PC-3 (cell line): ENCODE measurements at regions of chr13 and their contacts with region 1.

Region 1: GRCh38 chr13:101098873-101099272 is 317.4 kb downstream of the NALCN start:
- DNase-seq: no peak
- ATAC-seq: no peak
- H3K4me3 ChIP-seq: no peak overlapping the region
- H3K27ac ChIP-seq: no peak overlapping the region
- H3K4me1 ChIP-seq: no peaks in the 10 kb centered on the region
- H3K27me3 ChIP-seq: no peaks in the 10 kb centered on the region
- CTCF ChIP-seq: no peak

Region 2: GRCh38 chr13:100646030-100646673 is 452.7 kb before region 1 on chr13:
- CTCF ChIA-PET with region 1: no interaction called
- POLR2A ChIA-PET with region 1: no interaction called
- intact Hi-C with region 1: loop called (anchors 5 kb)
- DNase-seq: peak; percentile 48
- ATAC-seq: peak; percentile 64
- H3K4me3 ChIP-seq: no peak overlapping the region
- H3K27ac ChIP-seq: no peak overlapping the region
- H3K4me1 ChIP-seq: no peaks in the 10 kb centered on the region
- H3K27me3 ChIP-seq: no peaks in the 10 kb centered on the region
- CTCF ChIP-seq: peak; percentile 66

Region 3: DNA sequence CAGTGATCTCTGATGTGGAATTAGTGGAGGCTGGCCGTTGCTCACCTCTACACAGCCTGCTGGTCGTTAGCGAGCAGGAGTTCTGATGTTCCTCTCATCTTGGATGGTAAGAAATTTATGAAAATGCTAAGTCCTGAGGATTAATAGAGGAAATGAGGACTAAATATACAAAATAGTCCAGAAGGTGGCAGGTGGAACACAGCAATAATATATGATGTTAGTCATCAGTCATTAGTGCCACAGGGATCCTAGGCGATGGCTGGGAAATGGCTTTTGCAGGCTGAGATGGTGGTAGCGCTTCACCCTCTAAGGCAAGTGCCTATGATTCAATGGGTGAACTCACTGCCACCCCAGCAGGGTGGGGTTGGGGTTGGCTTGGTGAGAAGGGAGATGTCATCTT is 85.6 kb before region 1 on chr13:
- CTCF ChIA-PET with region 1: no interaction called
- POLR2A ChIA-PET with region 1: no interaction called
- intact Hi-C with region 1: loop called (anchors 1 kb)
- DNase-seq: peak; percentile 30
- ATAC-seq: peak; percentile 55
- H3K4me3 ChIP-seq: no peak overlapping the region
- H3K27ac ChIP-seq: no peak overlapping the region
- H3K4me1 ChIP-seq: peaks cover 1% of the 10 kb centered on the region; the same call in 1 of the 2 replicates
- H3K27me3 ChIP-seq: no peaks in the 10 kb centered on the region
- CTCF ChIP-seq: peak; percentile 29; the same call in 1 of the 2 replicates

Region 4: GRCh38 chr13:101026736-101027398 is 72.0 kb before region 1 on chr13:
- CTCF ChIA-PET with region 1: no interaction called
- POLR2A ChIA-PET with region 1: no interaction called
- intact Hi-C with region 1: loop called (anchors 5 kb)
- DNase-seq: peak; percentile 31
- ATAC-seq: 0 out of 2 replicates have a peak, but pooled peaks have one; percentile 2
- H3K4me3 ChIP-seq: peak overlapping the region; percentile 32; the same call in 1 of the 2 replicates
- H3K27ac ChIP-seq: peak overlapping the region; percentile 95
- H3K4me1 ChIP-seq: peaks cover 30% of the 10 kb centered on the region
- H3K27me3 ChIP-seq: no peaks in the 10 kb centered on the region
- CTCF ChIP-seq: no peak

Region 5: GRCh38 chr13:101111894-101112293 is 13.0 kb after region 1 on chr13:
- CTCF ChIA-PET with region 1: no interaction called
- POLR2A ChIA-PET with region 1: no interaction called
- intact Hi-C with region 1: loop called (anchors 1 kb)
- DNase-seq: peak; percentile 23
- ATAC-seq: peak; percentile 71
- H3K4me3 ChIP-seq: no peak overlapping the region
- H3K27ac ChIP-seq: no peak overlapping the region
- H3K4me1 ChIP-seq: peaks cover 11% of the 10 kb centered on the region
- H3K27me3 ChIP-seq: no peaks in the 10 kb centered on the region
- CTCF ChIP-seq: no peak